ENCODE measurements at regions of chr7 and their contacts with region 1.

Region 1: GRCh38 chr7:122528879-122529481 is 169.9 kb downstream of the RNF133 start:
- DNase-seq: peak; percentile 46
- H3K4me3 Mint-ChIP-seq: no peak overlapping the region
- H3K27ac Mint-ChIP-seq: no peak overlapping the region
- H3K4me1 Mint-ChIP-seq: no peaks in the 10 kb centered on the region
- H3K27me3 Mint-ChIP-seq: no peaks in the 10 kb centered on the region
- CTCF ChIP-seq: peak; percentile 42

Region 2: DNA sequence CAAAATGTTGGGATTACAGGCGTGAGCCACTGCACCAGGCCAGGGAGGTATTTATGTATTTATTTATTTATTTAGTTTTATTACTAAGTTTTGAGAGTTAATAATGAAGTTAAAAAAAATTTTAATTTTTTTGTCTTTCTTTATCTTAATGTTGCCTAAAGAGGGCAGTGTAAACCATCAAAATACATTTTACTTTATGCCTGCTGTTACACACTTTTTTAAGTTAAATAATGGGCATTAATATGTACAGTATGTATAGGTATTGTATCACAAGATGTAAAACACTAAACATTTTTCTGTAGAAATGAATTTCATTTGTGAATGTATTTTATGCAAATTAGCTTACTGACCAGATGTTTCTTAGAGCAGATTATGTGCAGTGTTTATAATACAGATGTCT is 514.3 kb before region 1 on chr7:
- CTCF ChIA-PET with region 1: interaction called, 3 read pairs
- POLR2A ChIA-PET with region 1: no interaction called
- intact Hi-C with region 1: loop called (anchors 2 kb)
- DNase-seq: peak; percentile 12
- H3K4me3 Mint-ChIP-seq: no peak overlapping the region
- H3K27ac Mint-ChIP-seq: no peak overlapping the region
- H3K4me1 Mint-ChIP-seq: no peaks in the 10 kb centered on the region
- H3K27me3 Mint-ChIP-seq: no peaks in the 10 kb centered on the region
- CTCF ChIP-seq: peak; percentile 27

Region 3: DNA sequence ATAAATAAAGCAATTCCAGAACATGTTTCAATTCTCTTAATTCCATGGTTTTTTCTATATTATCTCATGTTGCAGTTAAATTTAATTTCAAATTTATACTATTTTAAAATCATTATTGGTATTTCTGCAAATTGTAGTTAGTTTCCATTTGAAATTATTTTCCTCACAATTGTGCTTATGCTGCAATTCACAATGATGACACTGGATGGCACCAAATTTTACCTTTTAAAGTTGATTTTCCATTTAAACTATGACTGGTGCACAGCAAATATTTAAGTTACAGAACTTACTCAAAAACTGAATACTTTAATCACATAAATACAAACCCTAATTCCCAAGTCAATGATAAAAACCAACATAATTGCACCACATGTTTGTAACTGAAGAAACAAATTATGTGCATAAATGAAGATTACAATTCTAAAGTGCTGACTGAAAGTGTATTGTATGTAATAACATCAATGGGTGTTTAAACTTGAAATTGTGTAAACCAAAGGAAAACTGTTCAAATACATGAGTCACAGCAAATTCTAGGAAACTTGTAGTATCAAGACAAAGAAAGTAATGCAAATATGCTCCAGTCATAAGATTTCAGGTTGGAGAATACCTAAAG is 309.6 kb before region 1 on chr7:
- CTCF ChIA-PET with region 1: interaction called, 186 read pairs
- POLR2A ChIA-PET with region 1: interaction called, 3 read pairs
- intact Hi-C with region 1: loop called (anchors 1 kb)
- DNase-seq: peak; percentile 41
- H3K4me3 Mint-ChIP-seq: no peak overlapping the region
- H3K27ac Mint-ChIP-seq: no peak overlapping the region
- H3K4me1 Mint-ChIP-seq: peaks cover 6% of the 10 kb centered on the region
- H3K27me3 Mint-ChIP-seq: peaks cover 18% of the 10 kb centered on the region
- CTCF ChIP-seq: peak; percentile 54

Region 4: GRCh38 chr7:122577449-122578003 is 48.5 kb after region 1 on chr7:
- CTCF ChIA-PET with region 1: no interaction called
- POLR2A ChIA-PET with region 1: no interaction called
- intact Hi-C with region 1: no loop called
- DNase-seq: no peak
- H3K4me3 Mint-ChIP-seq: no peak overlapping the region
- H3K27ac Mint-ChIP-seq: no peak overlapping the region
- H3K4me1 Mint-ChIP-seq: no peaks in the 10 kb centered on the region
- H3K27me3 Mint-ChIP-seq: no peaks in the 10 kb centered on the region
- CTCF ChIP-seq: no peak

Region 5: DNA sequence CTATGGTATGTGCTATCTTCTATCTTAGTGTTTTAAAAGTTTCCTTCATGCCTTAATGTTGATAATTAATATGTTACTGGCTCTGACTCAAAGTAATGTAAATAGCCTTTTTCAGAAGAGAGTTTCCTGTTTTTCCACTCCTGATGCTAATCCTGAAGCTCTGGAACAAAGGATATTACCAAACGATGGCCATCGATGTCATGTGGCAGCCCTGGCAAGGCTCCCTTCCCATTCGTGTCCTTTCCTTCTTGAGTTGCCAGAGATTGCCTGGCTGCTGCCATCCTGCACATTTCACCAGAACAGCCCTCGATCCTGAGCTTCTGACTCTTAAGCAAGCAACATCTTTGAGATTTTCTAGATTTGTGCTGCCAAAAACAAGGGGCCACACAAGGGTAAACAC is 123.9 kb after region 1 on chr7:
- CTCF ChIA-PET with region 1: no interaction called
- POLR2A ChIA-PET with region 1: no interaction called
- intact Hi-C with region 1: no loop called
- DNase-seq: no peak
- H3K4me3 Mint-ChIP-seq: no peak overlapping the region
- H3K27ac Mint-ChIP-seq: no peak overlapping the region
- H3K4me1 Mint-ChIP-seq: no peaks in the 10 kb centered on the region
- H3K27me3 Mint-ChIP-seq: no peaks in the 10 kb centered on the region
- CTCF ChIP-seq: no peak

Measured in MCF 10A (cell line).